ENCODE measurements at regions of chr2 and their contacts with region 1.

Region 1: GRCh38 chr2:234690569-234691213 is 193.8 kb upstream of the ARL4C start:
- DNase-seq: no peak
- ATAC-seq: no peak
- H3K4me3 ChIP-seq: no peak overlapping the region
- H3K27ac ChIP-seq: no peak overlapping the region
- H3K4me1 ChIP-seq: peaks cover 27 to 48% of the 10 kb centered on the region in 2 experiments
- H3K27me3 ChIP-seq: no peaks in the 10 kb centered on the region
- CTCF ChIP-seq: no peak
- POLR2A ChIP-seq: no peak
- RAD21 ChIP-seq: no peak

Region 2: DNA sequence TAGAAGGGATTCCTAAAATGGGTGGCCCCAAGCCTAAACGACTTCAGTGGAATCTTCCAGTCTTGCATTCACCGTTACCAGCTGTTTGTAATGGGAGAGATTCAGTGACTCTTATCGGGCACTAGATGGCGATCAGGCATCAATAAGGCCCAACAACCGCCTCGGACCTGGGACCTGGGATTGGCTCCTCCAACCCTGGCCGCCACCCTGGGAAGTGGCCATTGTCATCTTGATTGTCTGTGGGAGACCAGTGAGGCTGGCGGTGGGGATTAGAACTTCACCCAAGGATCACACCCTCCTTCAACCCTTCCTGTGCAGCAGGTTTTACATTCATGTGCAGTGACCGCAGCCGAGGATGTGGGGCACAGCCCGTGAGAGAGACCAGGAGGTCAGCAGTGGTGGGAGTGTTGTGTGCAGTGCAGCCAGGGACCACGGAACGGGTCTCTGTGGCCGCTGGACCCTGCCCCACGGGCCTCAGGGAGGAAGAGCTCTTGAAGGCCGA is 554.9 kb before region 1 on chr2:
- CTCF ChIA-PET with region 1: no interaction called
- POLR2A ChIA-PET with region 1: no interaction called
- RAD21 ChIA-PET with region 1: no interaction called
- intact Hi-C with region 1: no loop called
- DNase-seq: peak; percentile 73
- ATAC-seq: peak; percentile 97
- H3K4me3 ChIP-seq: no peak overlapping the region
- H3K27ac ChIP-seq: peak overlapping the region; percentile 15; the same call in 1 of the 2 replicates
- H3K4me1 ChIP-seq: peaks cover 8 to 33% of the 10 kb centered on the region in 2 experiments; a peak in 3 of 4 replicates
- H3K27me3 ChIP-seq: no peaks in the 10 kb centered on the region
- CTCF ChIP-seq: peak; percentile 82 to 91 (median 89)
- POLR2A ChIP-seq: no peak
- RAD21 ChIP-seq: peak; percentile 99

Region 3: GRCh38 chr2:234881413-234882241 is 190.9 kb after region 1 on chr2:
- CTCF ChIA-PET with region 1: no interaction called
- POLR2A ChIA-PET with region 1: no interaction called
- RAD21 ChIA-PET with region 1: interaction called in 1 of 2 experiments, 3 read pairs
- intact Hi-C with region 1: loop called (anchors 10 kb)
- DNase-seq: peak; percentile 94
- ATAC-seq: peak; percentile 87
- H3K4me3 ChIP-seq: peak overlapping the region; percentile 52
- H3K27ac ChIP-seq: peak overlapping the region; percentile 63
- H3K4me1 ChIP-seq: peaks cover 30 to 37% of the 10 kb centered on the region in 2 experiments
- H3K27me3 ChIP-seq: no peaks in the 10 kb centered on the region
- CTCF ChIP-seq: peak; percentile 75 to 97 (median 95); a peak in 5 of 6 replicates
- POLR2A ChIP-seq: no peak
- RAD21 ChIP-seq: peak; percentile 84

Region 4: DNA sequence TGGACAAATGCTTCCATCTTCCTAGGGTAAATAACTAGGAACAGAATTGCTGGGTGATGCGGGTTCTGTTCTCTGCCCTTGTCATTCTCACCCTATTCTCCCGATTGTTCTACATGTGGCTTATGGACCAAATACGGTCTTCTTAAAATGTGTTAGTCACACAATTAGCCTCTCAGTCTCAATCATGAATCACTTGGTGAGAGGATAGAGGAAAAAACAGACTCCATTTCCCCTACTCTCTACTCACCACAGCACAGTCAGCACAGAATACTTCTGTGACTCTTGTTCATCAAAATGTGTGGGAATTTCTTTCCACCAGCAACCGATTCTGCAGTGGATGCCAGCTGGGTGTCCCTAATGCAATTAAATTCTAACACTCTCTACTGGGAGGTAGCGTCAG is 386.4 kb after region 1 on chr2:
- CTCF ChIA-PET with region 1: no interaction called
- POLR2A ChIA-PET with region 1: no interaction called
- RAD21 ChIA-PET with region 1: no interaction called
- intact Hi-C with region 1: no loop called
- DNase-seq: no peak
- ATAC-seq: no peak
- H3K4me3 ChIP-seq: no peak overlapping the region
- H3K27ac ChIP-seq: no peak overlapping the region
- H3K4me1 ChIP-seq: no peaks in the 10 kb centered on the region
- H3K27me3 ChIP-seq: no peaks in the 10 kb centered on the region
- CTCF ChIP-seq: no peak
- POLR2A ChIP-seq: no peak
- RAD21 ChIP-seq: no peak

Region 5: DNA sequence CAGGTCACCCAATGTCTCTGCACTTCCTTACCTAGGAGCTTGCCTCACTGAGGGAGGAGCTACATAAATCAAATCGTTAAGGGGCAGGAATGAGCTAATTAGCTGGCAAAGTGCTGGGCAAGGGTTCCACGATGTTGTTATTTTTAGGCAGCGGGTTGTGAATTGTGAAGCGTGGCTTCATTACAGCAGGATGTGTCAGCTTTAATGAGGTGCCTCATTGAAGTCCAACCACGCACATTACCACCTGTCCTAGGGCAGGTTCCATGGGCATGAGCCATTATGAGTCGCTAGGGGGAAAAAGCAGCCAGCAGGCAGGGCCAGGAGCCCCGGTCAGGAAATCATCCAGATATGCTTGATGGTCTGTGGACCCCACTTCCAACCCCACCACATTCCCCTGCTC is 676.2 kb after region 1 on chr2:
- CTCF ChIA-PET with region 1: no interaction called
- POLR2A ChIA-PET with region 1: no interaction called
- RAD21 ChIA-PET with region 1: no interaction called
- intact Hi-C with region 1: no loop called
- DNase-seq: no peak
- ATAC-seq: peak; percentile 75
- H3K4me3 ChIP-seq: no peak overlapping the region
- H3K27ac ChIP-seq: no peak overlapping the region
- H3K4me1 ChIP-seq: peaks cover 0 to 28% of the 10 kb centered on the region in 2 experiments; a peak in 2 of 4 replicates
- H3K27me3 ChIP-seq: peaks cover 6% of the 10 kb centered on the region; the same call in 1 of the 2 replicates
- CTCF ChIP-seq: no peak
- POLR2A ChIP-seq: no peak
- RAD21 ChIP-seq: no peak